ENCODE measurements at regions of chr4 and their contacts with region 1.

Region 1: DNA sequence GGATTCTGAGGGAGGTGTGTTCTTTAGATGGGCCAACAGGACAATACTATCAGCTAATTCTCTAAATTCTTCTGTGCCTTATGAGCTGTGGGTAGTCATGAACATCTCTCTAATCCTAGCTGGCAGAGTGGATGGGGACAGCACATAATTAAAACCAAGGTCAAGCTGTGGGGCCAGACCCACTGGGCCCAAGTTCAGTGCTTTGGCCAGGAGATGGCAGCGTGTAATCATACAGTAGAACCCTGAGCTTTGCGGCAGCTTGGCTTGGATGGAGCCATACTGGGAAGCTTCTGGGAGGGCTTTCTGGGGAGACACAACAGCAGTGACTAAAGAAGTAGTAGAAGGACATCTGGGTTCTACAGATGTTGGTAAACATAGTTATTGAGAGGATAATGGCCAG is 140.3 kb upstream of the CXCL13 start:
- DNase-seq: no peak
- H3K4me3 ChIP-seq: no peak overlapping the region
- H3K27ac ChIP-seq: no peak overlapping the region
- H3K4me1 ChIP-seq: no peaks in the 10 kb centered on the region
- H3K27me3 ChIP-seq: no peaks in the 10 kb centered on the region
- CTCF ChIP-seq: peak in 5 of 6 experiments; percentile 39 to 69 (median 52)
- POLR2A ChIP-seq: no peak

Region 2: GRCh38 chr4:77308843-77309242 is 156.4 kb before region 1 on chr4:
- intact Hi-C with region 1: no loop called
- DNase-seq: no peak
- H3K4me3 ChIP-seq: no peak overlapping the region
- H3K27ac ChIP-seq: no peak overlapping the region
- H3K4me1 ChIP-seq: peaks cover 0 to 14% (median 0%) of the 10 kb centered on the region in 3 donors
- H3K27me3 ChIP-seq: no peaks in the 10 kb centered on the region
- CTCF ChIP-seq: peak in 3 of 6 experiments; percentile 16 to 60 (median 23)
- POLR2A ChIP-seq: no peak

Region 3: GRCh38 chr4:77613267-77613666 is 148.0 kb after region 1 on chr4:
- intact Hi-C with region 1: loop called (anchors 5 kb)
- DNase-seq: no peak
- H3K4me3 ChIP-seq: no peak overlapping the region
- H3K27ac ChIP-seq: no peak overlapping the region
- H3K4me1 ChIP-seq: no peaks in the 10 kb centered on the region
- H3K27me3 ChIP-seq: peaks cover 0 to 31% (median 0%) of the 10 kb centered on the region in 4 donors
- CTCF ChIP-seq: no peak
- POLR2A ChIP-seq: no peak

Region 4: DNA sequence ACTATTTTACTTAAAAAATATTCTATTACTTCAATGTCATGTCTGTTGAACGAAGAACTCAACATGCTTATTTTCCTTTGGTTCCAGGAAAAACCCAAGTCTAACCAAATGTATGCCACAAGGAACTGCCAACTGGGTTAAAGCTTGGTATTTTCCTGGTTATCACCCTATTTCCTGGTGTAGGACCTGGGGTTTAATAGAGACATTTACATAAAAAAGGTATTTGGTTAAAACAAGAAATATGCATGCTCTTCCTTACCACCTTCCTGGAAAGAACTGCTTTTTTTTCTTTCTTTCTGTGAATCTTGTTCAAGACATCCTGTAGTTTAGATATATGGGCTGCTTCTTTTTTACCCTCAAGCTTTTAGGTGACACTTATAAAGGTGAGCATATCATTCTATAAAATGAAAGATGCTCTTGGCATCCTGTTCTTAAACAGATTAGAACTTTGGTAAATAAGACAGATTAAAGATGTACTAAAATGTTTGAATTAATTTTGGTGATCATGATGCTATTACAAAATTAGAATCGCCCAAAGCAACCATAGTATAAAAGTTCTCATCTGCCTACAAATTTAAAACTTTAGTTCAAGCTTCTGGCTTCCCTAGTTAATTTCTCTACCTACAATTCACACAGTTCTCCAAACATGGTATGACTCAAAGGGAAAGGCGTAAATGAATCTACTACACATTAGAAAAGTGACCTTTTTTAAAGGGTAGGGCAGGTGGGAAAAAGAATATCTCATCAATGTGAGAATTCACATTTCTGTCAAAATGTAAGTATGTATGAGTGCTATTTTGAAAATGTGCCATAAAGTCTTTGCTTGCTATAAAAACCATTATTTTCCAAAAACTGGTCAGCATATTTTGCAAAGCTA is 250.4 kb after region 1 on chr4:
- intact Hi-C with region 1: no loop called
- DNase-seq: no peak
- H3K4me3 ChIP-seq: no peak overlapping the region
- H3K27ac ChIP-seq: no peak overlapping the region
- H3K4me1 ChIP-seq: no peaks in the 10 kb centered on the region
- H3K27me3 ChIP-seq: no peaks in the 10 kb centered on the region
- CTCF ChIP-seq: no peak
- POLR2A ChIP-seq: no peak

Measured in esophagus squamous epithelium (tissue), 5 donors.